AG04449 (cell line): ENCODE measurements at regions of chr2 and their contacts with region 1.

Region 1: DNA sequence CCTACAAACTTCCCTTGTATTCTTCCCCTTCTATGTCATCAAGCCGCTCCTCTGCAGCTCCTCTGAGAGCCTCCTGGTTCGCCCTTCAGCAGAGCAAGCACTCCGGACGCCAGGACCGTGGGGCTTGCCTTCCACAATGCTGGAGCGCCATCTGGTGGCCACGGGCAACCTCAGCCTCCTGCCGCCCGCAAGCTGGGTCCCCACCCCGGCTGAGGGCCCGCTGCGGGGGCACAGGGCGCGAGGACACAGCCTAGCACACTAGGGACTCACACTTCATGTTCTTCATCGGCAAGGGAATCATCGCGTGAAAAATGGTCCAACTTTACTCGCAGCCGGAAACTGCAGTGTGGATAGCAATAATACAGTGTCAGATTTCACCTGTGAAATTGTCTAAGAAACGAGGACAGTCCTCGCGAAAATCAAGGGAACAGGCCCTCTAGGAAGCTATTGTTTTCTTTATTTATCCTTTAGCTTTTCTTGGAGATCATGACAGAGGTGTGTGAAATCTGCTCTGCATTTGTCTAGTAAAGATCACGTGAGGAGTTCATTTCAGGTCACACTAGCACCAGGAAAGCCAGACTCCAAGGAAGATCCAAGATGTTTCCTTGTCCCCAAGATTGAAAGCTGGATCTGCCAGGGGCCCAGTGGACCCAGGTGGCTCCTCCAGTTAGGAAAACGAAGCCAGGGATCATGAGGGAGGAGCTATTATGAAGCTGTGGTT is 5.8 kb downstream of the PRLH start:
- DNase-seq: peak; percentile 59
- H3K4me3 ChIP-seq: 0 out of 2 replicates have a peak overlapping the region, but pooled peaks have one; percentile 6
- CTCF ChIP-seq: peak; percentile 100

Region 2: GRCh38 chr2:236986524-236987330 is 585.5 kb before region 1 on chr2:
- CTCF ChIA-PET with region 1: no interaction called
- POLR2A ChIA-PET with region 1: no interaction called
- DNase-seq: no peak
- H3K4me3 ChIP-seq: no peak overlapping the region
- CTCF ChIP-seq: no peak

Region 3: GRCh38 chr2:237132799-237133198 is 439.4 kb before region 1 on chr2:
- CTCF ChIA-PET with region 1: interaction called, 16 read pairs
- POLR2A ChIA-PET with region 1: no interaction called
- DNase-seq: no peak
- H3K4me3 ChIP-seq: no peak overlapping the region
- CTCF ChIP-seq: no peak

Region 4: GRCh38 chr2:237413777-237414661 is 158.2 kb before region 1 on chr2 and contains the start of gene COL6A3:
- CTCF ChIA-PET with region 1: interaction called, 87 read pairs
- POLR2A ChIA-PET with region 1: no interaction called
- DNase-seq: peak; percentile 81
- H3K4me3 ChIP-seq: peak within 1 kb of the TSS; percentile 95
- CTCF ChIP-seq: no peak

Region 5: DNA sequence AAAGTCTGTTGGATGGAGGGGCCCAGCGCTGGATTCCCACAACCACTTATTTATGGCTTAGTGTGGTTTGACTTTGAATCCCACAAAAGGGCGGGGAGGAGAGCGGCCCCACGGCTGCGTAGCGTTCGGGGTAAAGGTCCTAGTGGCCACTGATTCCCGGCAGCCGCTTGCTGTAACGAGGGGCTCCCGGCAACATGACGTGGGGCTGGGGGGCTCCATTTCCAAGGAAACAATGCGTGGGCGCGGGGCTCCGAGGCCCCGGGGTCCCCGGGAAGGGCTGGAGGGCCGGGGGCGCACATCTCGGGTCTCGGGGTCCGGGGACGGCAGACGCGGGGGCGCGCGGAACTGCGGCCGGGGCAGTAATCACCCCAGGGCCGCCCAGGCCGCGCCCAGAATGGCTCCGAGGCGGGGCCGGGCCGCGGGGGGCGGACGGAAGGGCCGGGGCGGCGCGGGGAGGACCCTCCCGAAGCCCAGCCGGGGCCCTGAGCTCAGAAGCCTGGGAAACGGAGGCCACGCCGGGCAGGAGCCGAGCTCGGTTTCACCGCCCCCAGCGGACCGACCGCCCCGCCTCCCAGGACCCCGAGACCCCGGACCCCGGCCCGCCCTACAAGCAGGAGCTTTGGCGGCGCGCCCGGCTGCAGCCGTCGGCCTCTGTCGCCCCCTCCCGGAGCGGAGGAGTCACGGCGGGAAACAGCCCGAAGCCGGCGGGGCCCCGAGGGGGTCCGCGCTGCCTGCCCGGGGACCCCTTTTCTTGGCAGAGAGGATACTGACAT is 97.1 kb before region 1 on chr2:
- CTCF ChIA-PET with region 1: interaction called, 89 read pairs
- POLR2A ChIA-PET with region 1: no interaction called
- DNase-seq: no peak
- H3K4me3 ChIP-seq: peak overlapping the region; percentile 56
- CTCF ChIP-seq: peak; percentile 93

Region 6: GRCh38 chr2:237524631-237525030 is 47.5 kb before region 1 on chr2:
- CTCF ChIA-PET with region 1: interaction called, 13 read pairs
- POLR2A ChIA-PET with region 1: no interaction called
- DNase-seq: no peak
- H3K4me3 ChIP-seq: no peak overlapping the region
- CTCF ChIP-seq: no peak

Region 7: GRCh38 chr2:237558906-237559641 is 13.1 kb before region 1 on chr2:
- CTCF ChIA-PET with region 1: interaction called, 45 read pairs
- POLR2A ChIA-PET with region 1: no interaction called
- DNase-seq: no peak
- H3K4me3 ChIP-seq: no peak overlapping the region
- CTCF ChIP-seq: no peak